ENCODE measurements at regions of chr17 and their contacts with region 1.

Region 1: DNA sequence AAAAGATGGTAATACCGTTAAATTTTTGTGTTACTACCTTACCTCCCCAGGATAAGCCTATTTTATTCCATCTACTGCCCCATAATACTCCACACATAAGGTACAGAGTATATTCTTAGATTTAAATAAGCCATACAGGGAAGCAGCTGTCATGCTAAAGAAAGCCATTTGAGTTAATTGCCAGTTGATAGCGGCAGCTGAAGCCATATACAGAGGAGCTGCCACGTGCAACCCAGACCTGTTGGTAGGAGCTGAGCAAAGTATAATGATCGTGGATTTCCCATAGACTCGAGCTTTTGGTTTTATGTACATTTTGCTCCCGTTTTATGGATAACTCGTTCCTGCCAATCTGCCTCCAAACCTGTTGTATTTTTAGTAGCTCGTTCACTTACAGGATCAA is 12.0 kb downstream of the CPSF4L start:
- DNase-seq: no peak
- ATAC-seq: no peak
- H3K4me3 ChIP-seq: no peak overlapping the region
- H3K27ac ChIP-seq: no peak overlapping the region
- H3K4me1 ChIP-seq: no peaks in the 10 kb centered on the region
- H3K27me3 ChIP-seq: peaks cover 4 to 9% of the 10 kb centered on the region in 2 experiments; a peak in 4 of 5 replicates
- CTCF ChIP-seq: no peak
- EP300 ChIP-seq: no peak
- POLR2A ChIP-seq: no peak
- RAD21 ChIP-seq: no peak

Region 2: GRCh38 chr17:72719578-72720493 is 529.9 kb before region 1 on chr17:
- CTCF ChIA-PET with region 1: no interaction called
- POLR2A ChIA-PET with region 1: no interaction called
- in situ Hi-C with region 1: loop called (anchors 5 kb)
- intact Hi-C with region 1: loop called (anchors 2 kb)
- DNase-seq: no peak
- ATAC-seq: no peak
- H3K4me3 ChIP-seq: no peak overlapping the region
- H3K27ac ChIP-seq: no peak overlapping the region
- H3K4me1 ChIP-seq: no peaks in the 10 kb centered on the region
- H3K27me3 ChIP-seq: no peaks in the 10 kb centered on the region
- CTCF ChIP-seq: no peak
- EP300 ChIP-seq: no peak
- POLR2A ChIP-seq: no peak
- RAD21 ChIP-seq: no peak

Region 3: DNA sequence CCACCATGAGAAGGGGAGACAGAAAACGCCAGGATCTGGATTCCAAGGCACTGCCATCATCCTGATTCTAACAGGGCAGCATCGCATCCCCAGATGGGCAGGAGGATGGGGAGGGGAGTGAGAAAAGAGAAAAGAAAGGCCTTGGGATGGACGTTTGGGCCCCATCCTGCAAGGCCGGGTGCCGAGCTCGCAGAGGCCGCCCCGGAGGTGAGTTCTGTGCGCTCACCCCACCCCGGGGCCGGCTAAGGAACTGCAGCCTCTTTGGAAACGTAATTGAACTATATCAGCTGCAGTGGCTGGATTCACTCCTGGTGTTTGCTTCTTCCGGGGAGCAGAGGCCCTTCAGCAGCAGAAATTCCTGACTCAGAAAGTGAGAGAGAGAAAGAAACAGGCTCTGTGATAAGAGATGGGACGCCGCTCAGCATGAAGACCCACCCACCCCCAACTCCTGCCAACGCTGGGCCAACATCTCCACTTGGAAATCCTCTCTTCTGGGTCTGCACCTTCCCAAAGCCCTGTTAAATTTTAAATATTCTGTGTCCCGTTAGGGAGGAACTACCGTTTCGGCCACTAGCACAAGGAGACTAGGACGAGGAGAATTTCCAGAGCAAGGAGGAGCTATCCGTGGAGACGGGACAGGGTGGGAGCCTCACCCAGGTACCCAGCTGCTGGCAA is 93.4 kb before region 1 on chr17:
- CTCF ChIA-PET with region 1: no interaction called
- POLR2A ChIA-PET with region 1: no interaction called
- in situ Hi-C with region 1: no loop called
- intact Hi-C with region 1: no loop called
- DNase-seq: peak; percentile 71 to 80 (median 74)
- ATAC-seq: peak; percentile 99
- H3K4me3 ChIP-seq: no peak overlapping the region
- H3K27ac ChIP-seq: no peak overlapping the region
- H3K4me1 ChIP-seq: peaks cover 2 to 10% of the 10 kb centered on the region in 2 experiments; a peak in 2 of 5 replicates
- H3K27me3 ChIP-seq: peaks cover 7 to 17% of the 10 kb centered on the region in 2 experiments; a peak in 4 of 5 replicates
- CTCF ChIP-seq: peak; percentile 81 to 87 (median 85)
- EP300 ChIP-seq: no peak
- POLR2A ChIP-seq: no peak
- RAD21 ChIP-seq: peak; percentile 71 to 92

Region 4: DNA sequence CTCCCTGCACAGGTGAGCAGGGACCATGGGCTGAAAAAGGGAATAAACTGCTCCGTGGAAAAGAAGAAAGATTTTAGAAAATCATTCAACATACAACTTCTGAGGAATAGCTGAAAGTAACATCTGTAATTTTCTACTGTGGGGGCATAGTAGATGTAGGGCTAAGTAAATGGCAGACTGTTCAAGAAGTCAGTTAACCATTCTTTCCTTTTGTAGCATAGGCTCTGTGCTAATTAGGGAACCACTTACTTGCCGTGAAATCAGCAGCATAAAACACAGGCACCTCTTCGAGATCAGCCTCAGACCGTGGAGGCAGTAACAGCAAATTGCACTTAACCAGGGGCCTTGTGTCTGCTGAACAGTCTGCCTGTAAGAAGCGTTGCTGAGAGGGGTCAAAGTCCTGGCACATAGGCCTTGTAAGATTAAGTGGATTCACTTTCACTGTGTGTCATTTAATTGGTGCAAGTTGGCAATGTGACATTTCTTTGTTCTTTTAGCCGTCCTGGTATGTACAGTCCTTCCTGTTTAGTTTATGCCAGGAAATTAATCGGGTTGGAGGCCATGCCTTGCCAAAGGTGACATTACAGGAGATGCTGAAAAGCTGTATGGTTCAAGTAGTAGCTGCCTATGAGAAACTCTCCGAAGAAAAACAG is 46.4 kb before region 1 on chr17:
- CTCF ChIA-PET with region 1: no interaction called
- POLR2A ChIA-PET with region 1: no interaction called
- in situ Hi-C with region 1: no loop called
- intact Hi-C with region 1: no loop called
- DNase-seq: no peak
- ATAC-seq: no peak
- H3K4me3 ChIP-seq: no peak overlapping the region
- H3K27ac ChIP-seq: no peak overlapping the region
- H3K4me1 ChIP-seq: peaks cover 3 to 8% of the 10 kb centered on the region in 2 experiments; a peak in 3 of 5 replicates
- H3K27me3 ChIP-seq: no peaks in the 10 kb centered on the region
- CTCF ChIP-seq: no peak
- EP300 ChIP-seq: no peak
- POLR2A ChIP-seq: no peak
- RAD21 ChIP-seq: no peak